ENCODE measurements at regions of chr15 and their contacts with region 1.

Region 1: GRCh38 chr15:56886932-56887781 is 31.3 kb upstream of the TCF12 start:
- DNase-seq: peak; percentile 53
- ATAC-seq: peak; percentile 99
- H3K4me3 ChIP-seq: peak overlapping the region; percentile 60 to 75
- H3K27ac ChIP-seq: peak overlapping the region; percentile 98
- H3K4me1 ChIP-seq: peaks cover 9% of the 10 kb centered on the region
- H3K27me3 ChIP-seq: no peaks in the 10 kb centered on the region
- CTCF ChIP-seq: no peak; the same call in 1 of the 2 replicates

Region 2: DNA sequence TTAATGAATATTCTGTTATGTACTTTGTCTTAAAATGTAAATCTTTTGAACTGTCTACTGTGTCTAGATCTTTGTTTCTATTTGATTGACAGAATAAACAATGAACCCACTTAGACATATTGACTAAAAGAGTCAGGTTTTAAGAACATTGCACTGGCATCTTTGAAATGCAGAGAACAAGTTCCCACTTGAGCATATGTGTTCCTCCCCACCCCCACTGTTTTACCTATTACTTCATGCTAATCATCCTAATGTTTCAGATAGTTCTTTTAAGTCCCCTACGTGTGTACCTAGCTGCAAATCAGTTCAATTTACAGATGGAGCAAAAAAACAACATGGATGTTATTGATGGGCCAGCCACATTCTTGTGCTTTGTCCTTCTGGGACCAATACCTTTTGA is 19.6 kb after region 1 on chr15:
- CTCF ChIA-PET with region 1: no interaction called
- POLR2A ChIA-PET with region 1: interaction called, 11 read pairs
- in situ Hi-C with region 1: no loop called
- intact Hi-C with region 1: no loop called
- DNase-seq: no peak
- ATAC-seq: no peak
- H3K4me3 ChIP-seq: no peak overlapping the region
- H3K27ac ChIP-seq: no peak overlapping the region
- H3K4me1 ChIP-seq: no peaks in the 10 kb centered on the region
- H3K27me3 ChIP-seq: no peaks in the 10 kb centered on the region
- CTCF ChIP-seq: no peak

Measured in Panc1 (cell line).